ENCODE measurements at regions of chr1 and their contacts with region 1.

Region 1: DNA sequence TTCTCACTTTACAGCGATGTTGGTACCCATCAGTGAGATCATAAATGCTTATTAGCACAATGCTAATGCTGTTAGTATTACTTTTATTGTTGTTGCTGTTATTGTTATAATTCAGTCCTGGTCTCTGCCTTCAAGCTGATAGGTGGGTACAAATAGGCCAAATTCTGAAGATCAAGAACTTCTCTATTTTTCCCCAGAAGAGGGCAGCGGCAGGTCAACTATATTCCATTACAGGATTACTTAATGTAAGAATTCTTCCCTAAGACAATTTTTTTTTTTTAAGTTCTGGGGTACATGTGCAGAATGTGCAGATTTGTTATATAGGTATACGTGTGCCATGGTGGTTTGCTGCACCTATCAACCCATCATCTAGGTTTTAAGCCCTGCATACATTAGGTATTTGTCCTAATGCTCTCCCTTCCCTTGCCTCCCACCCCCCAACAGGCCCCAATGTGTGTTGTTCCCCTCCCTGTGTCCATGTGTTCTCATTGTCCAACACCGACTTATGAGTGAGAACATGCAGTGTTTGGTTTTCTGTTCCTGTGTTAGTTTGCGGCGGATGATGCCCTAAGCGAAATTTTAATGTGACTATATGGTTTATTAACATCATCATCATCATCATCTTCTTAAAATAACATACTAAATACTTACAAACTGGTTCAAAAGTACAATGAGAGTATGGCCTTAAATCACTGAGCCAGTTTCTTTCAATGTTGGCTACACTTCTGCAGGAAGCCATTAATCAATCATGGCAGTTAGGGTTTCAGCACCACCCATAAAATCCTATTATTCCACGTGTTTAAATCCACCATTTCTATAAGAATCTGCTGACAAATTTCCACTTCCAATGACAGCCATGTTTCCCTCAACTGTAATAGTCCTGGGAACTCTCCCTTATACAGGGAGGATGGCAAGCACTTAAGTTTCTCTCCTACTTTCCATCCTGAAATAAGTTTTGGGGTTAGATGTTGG is 19.2 kb downstream of the SLC19A2 start:
- DNase-seq: no peak
- ATAC-seq: no peak
- H3K4me3 Mint-ChIP-seq: no peak overlapping the region
- H3K27ac Mint-ChIP-seq: no peak overlapping the region
- H3K4me1 Mint-ChIP-seq: peaks cover 6% of the 10 kb centered on the region
- H3K27me3 Mint-ChIP-seq: no peaks in the 10 kb centered on the region

Region 2: DNA sequence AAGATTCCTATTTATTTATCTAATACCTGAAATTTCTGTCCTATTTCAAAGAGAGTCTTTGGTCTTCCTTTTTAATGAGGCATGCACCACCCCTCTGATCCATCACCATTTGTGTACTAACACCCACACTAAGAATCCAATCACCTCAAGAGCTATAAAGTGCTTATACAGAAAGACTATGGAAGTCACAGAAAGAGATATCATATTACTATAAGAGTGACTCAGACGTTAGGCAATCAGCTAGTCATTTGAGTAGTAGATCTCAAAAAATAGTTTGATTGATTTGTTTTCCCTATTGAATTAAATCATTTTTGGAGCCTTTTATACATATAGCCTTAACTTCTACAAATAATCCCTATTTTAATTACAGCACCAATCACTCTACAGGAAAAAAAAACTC is 145.0 kb before region 1 on chr1:
- CTCF ChIA-PET with region 1: no interaction called
- DNase-seq: no peak
- ATAC-seq: no peak
- H3K4me3 Mint-ChIP-seq: no peak overlapping the region
- H3K27ac Mint-ChIP-seq: no peak overlapping the region
- H3K4me1 Mint-ChIP-seq: peaks cover 5% of the 10 kb centered on the region
- H3K27me3 Mint-ChIP-seq: no peaks in the 10 kb centered on the region

Region 3: DNA sequence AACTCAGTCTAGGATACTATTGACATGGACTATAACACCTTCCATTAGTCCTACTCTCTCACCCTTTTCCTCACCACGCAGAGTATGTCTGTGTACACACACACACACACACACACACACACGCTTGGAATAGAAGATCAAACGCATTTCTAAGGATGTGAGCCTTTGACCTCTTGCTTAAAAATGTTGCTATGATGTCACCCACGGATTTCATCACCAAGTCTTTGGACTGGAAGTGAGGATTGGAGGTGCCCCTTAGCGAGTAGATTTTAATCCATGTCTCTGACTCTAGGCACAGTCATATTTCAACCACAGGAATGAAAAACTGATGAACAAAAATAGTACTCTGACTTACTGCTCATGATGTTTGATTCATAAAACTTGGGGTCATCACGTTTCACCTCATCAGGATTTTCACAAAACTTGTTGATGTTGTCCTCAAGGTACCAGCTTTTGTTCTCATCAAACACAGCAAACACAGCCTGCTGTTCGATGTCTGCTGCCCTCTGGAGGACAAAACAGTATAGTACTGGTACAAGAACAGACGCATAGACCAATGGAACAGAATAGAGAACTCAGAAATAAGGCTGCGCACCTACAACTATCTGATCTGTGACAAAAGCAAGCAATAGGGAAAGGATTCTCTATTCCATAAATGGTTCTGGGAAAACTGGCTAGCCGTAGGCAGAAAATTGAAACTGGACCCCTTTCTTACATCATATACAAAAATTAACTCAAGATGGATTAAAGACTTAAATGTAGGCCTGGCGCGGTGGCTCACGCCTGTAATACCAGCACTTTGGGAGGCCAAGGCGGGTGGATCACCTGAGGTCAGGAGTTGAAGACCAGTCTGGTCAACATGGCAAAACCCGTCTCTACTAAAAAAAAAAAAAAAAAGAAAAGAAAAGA is 79.8 kb after region 1 on chr1:
- CTCF ChIA-PET with region 1: interaction called, 10 read pairs
- DNase-seq: peak; percentile 66
- ATAC-seq: peak; percentile 83
- H3K4me3 Mint-ChIP-seq: no peak overlapping the region
- H3K27ac Mint-ChIP-seq: no peak overlapping the region
- H3K4me1 Mint-ChIP-seq: no peaks in the 10 kb centered on the region
- H3K27me3 Mint-ChIP-seq: no peaks in the 10 kb centered on the region

Measured in activated CD8-positive, alpha-beta memory T cell treated with anti-CD3 and anti-CD28 coated beads, Interleukin-2, amount 10 ng/mL, durations not matched to agents 7 days and 5 days (primary cell).